ENCODE measurements at regions of chr4 and their contacts with region 1.

Region 1: GRCh38 chr4:142353149-142353738 is 492.9 kb downstream of the INPP4B start:
- DNase-seq: peak in 4 of 14 experiments; percentile 43 to 74 (median 64)
- ATAC-seq: peak; percentile 19
- H3K4me3 ChIP-seq: no peak overlapping the region
- H3K4me3 Mint-ChIP-seq: peak overlapping the region; percentile 52
- H3K27ac ChIP-seq: peak overlapping the region in 1 of 2 donors; percentile 72
- H3K27ac Mint-ChIP-seq: peak overlapping the region; percentile 89
- H3K4me1 ChIP-seq: peaks cover 45% of the 10 kb centered on the region
- H3K4me1 Mint-ChIP-seq: peaks cover 99% of the 10 kb centered on the region
- H3K27me3 ChIP-seq: no peaks in the 10 kb centered on the region
- H3K27me3 Mint-ChIP-seq: no peaks in the 10 kb centered on the region
- CTCF ChIP-seq: peak; percentile 97

Region 2: DNA sequence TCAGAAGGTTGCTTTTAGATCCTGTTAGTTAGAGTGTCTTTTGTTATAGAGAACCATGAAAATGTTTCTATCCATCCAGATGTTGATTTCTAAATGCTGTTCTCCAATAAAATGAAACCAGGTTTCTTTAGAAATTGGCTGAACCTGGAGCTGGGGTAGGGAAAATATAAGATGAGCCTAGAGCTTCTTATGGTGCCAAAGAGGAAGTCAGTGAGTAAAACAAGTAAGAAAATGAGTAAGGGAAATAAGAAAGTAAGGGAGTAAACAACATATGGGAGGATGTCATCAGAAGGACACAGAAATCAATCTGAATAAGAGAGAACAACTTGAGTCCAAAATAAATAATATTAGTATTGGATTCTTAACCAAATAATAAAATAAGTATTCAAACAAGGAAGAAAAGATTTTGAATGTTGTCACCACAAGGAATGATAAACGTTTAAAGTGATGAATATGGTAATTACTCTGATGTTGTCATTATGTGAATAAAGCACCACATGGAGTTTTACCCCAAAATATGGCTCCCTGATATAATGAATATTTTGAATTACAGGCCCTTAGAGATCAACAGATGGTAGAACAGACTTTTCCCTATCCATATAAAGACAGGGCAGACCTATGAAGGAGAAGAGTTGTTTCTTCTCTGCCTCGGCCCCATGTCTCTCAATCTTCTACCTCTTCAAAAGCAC is 210.7 kb before region 1 on chr4:
- CTCF ChIA-PET with region 1: no interaction called
- POLR2A ChIA-PET with region 1: no interaction called
- intact Hi-C with region 1: no loop called
- DNase-seq: no peak
- ATAC-seq: no peak
- H3K4me3 ChIP-seq: no peak overlapping the region
- H3K4me3 Mint-ChIP-seq: no peak overlapping the region
- H3K27ac ChIP-seq: no peak overlapping the region
- H3K27ac Mint-ChIP-seq: peak overlapping the region; percentile 45
- H3K4me1 ChIP-seq: no peaks in the 10 kb centered on the region
- H3K4me1 Mint-ChIP-seq: peaks cover 44% of the 10 kb centered on the region
- H3K27me3 ChIP-seq: no peaks in the 10 kb centered on the region
- H3K27me3 Mint-ChIP-seq: no peaks in the 10 kb centered on the region
- CTCF ChIP-seq: no peak

Region 3: GRCh38 chr4:142282870-142283431 is 70.3 kb before region 1 on chr4:
- CTCF ChIA-PET with region 1: interaction called, 15 read pairs
- POLR2A ChIA-PET with region 1: interaction called, 5 read pairs
- intact Hi-C with region 1: loop called in 1 of 2 experiments (anchors 5 kb)
- DNase-seq: peak in 6 of 14 experiments; percentile 11 to 69 (median 46)
- ATAC-seq: peak; percentile 47
- H3K4me3 ChIP-seq: no peak overlapping the region
- H3K4me3 Mint-ChIP-seq: no peak overlapping the region
- H3K27ac ChIP-seq: no peak overlapping the region
- H3K27ac Mint-ChIP-seq: no peak overlapping the region
- H3K4me1 ChIP-seq: peaks cover 20% of the 10 kb centered on the region
- H3K4me1 Mint-ChIP-seq: peaks cover 28% of the 10 kb centered on the region
- H3K27me3 ChIP-seq: no peaks in the 10 kb centered on the region
- H3K27me3 Mint-ChIP-seq: no peaks in the 10 kb centered on the region
- CTCF ChIP-seq: peak; percentile 82

Region 4: GRCh38 chr4:142372530-142373260 is 19.5 kb after region 1 on chr4:
- CTCF ChIA-PET with region 1: interaction called, 9 read pairs
- POLR2A ChIA-PET with region 1: interaction called, 26 read pairs
- intact Hi-C with region 1: loop called in 1 of 2 experiments (anchors 2 kb)
- DNase-seq: no peak
- ATAC-seq: no peak
- H3K4me3 ChIP-seq: no peak overlapping the region
- H3K4me3 Mint-ChIP-seq: peak overlapping the region; percentile 32
- H3K27ac ChIP-seq: no peak overlapping the region
- H3K27ac Mint-ChIP-seq: peak overlapping the region; percentile 84
- H3K4me1 ChIP-seq: peaks cover 24% of the 10 kb centered on the region
- H3K4me1 Mint-ChIP-seq: peaks cover 90% of the 10 kb centered on the region
- H3K27me3 ChIP-seq: no peaks in the 10 kb centered on the region
- H3K27me3 Mint-ChIP-seq: no peaks in the 10 kb centered on the region
- CTCF ChIP-seq: no peak

Region 5: GRCh38 chr4:142405021-142405694 is 51.9 kb after region 1 on chr4:
- CTCF ChIA-PET with region 1: interaction called, 10 read pairs
- POLR2A ChIA-PET with region 1: interaction called, 116 read pairs
- intact Hi-C with region 1: loop called in 1 of 2 experiments (anchors 2 kb)
- DNase-seq: peak; percentile 11 to 83 (median 44)
- ATAC-seq: peak; percentile 64
- H3K4me3 ChIP-seq: peak overlapping the region; percentile 63
- H3K4me3 Mint-ChIP-seq: peak overlapping the region; percentile 99
- H3K27ac ChIP-seq: peak overlapping the region; percentile 62 to 64
- H3K27ac Mint-ChIP-seq: peak overlapping the region; percentile 96
- H3K4me1 ChIP-seq: peaks cover 28% of the 10 kb centered on the region
- H3K4me1 Mint-ChIP-seq: peaks cover 72% of the 10 kb centered on the region
- H3K27me3 ChIP-seq: no peaks in the 10 kb centered on the region
- H3K27me3 Mint-ChIP-seq: no peaks in the 10 kb centered on the region
- CTCF ChIP-seq: no peak

Region 6: DNA sequence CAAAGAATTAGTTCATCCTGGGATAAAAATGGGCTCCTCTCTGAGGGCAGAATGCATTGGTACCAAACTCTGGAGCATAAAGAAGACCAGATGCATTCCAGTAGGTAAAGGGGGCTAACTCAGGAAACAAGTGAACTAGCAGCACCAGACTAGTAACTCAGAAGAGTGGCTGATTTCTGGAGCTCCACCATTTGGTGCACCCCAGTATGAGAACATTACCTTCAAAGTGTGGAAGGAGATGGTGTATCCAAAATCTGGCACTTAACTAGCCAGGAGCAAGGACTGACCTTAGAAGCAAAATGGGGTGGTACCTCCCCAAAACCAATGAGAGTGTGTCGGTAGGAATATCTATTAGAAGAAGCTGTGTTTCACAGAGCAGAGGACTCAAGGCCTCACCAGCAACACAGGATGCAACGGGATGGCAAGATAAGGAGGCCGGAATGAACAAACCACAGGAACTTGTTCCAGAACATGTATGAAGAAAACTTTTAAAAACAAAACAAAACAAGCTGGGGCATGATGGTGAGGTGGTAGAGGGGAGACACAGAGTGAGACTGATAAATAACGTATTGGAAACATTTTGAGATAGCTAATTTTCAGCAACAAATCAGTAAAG is 350.6 kb after region 1 on chr4:
- CTCF ChIA-PET with region 1: no interaction called
- POLR2A ChIA-PET with region 1: interaction called, 11 read pairs
- intact Hi-C with region 1: loop called in 1 of 2 experiments (anchors 5 kb)
- DNase-seq: peak in 10 of 14 experiments; percentile 3 to 82 (median 36)
- ATAC-seq: peak; percentile 79
- H3K4me3 ChIP-seq: peak overlapping the region; percentile 6
- H3K4me3 Mint-ChIP-seq: no peak overlapping the region
- H3K27ac ChIP-seq: peak overlapping the region; percentile 34 to 71
- H3K27ac Mint-ChIP-seq: no peak overlapping the region
- H3K4me1 ChIP-seq: peaks cover 68% of the 10 kb centered on the region
- H3K4me1 Mint-ChIP-seq: peaks cover 31% of the 10 kb centered on the region
- H3K27me3 ChIP-seq: no peaks in the 10 kb centered on the region
- H3K27me3 Mint-ChIP-seq: no peaks in the 10 kb centered on the region
- CTCF ChIP-seq: no peak